Common myeloid progenitor, CD34-positive (primary cell): ENCODE measurements at regions of chrX and their contacts with region 1.

Region 1: DNA sequence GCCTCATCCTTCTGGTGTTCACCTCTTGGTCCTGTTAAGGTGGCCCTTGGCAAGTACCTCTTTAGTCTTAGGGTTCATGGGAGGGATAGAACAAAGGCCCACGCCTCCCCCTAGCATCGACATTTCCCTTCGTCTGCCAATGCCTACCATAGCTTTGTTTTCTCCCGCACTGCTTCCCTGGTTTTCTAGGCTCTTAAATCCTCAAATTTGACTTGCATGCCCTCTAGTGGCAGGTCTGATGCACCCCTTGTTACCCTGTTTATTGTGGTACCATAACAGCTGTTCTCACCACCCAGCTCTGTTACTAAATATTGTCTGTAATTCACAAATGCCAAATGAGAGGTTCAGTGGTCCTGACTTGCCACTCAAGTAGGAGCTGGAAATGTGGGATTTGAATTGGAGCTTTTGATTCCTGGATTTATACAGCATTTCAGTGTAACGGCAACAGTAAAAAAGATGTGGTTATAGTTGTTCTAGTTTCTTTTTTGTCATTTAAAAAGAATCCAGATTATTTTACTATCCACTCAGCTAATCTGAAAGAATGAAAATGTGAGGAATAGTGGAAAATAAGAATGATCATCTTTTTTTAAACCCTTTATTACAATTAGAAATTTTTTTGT is 100.1 kb downstream of the REPS2 start:
- DNase-seq: peak; percentile 67 to 84 (median 81)
- H3K4me3 ChIP-seq: no peak overlapping the region
- H3K27ac ChIP-seq: no peak overlapping the region
- H3K4me1 ChIP-seq: no peaks in the 10 kb centered on the region
- H3K27me3 ChIP-seq: no peaks in the 10 kb centered on the region

Region 2: DNA sequence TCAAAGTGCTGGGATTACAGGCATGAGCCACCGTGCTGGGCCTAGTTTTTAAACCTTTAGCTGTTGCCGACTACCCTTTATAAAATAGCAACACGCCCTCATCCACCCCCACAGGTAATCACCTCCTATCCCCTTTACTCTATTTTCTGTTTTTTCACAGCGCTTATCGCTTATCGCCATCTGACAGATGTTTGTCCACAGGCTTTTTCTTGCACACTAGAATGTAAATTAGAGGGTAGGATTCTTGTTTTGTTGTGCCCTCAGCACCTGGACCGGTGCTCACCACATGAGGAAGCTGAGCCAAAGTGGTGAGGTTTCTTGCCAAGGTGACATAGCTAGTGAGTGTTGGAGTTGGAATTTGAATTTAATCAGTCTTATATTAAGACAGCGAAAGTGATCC is 173.5 kb before region 1 on chrX:
- CTCF ChIA-PET with region 1: interaction called, 15 read pairs
- POLR2A ChIA-PET with region 1: no interaction called
- DNase-seq: peak in 2 of 3 donors; percentile 39 to 59
- H3K4me3 ChIP-seq: no peak overlapping the region
- H3K27ac ChIP-seq: no peak overlapping the region
- H3K4me1 ChIP-seq: peaks cover 13 to 38% (median 26%) of the 10 kb centered on the region in 4 experiments
- H3K27me3 ChIP-seq: peaks cover 0 to 48% (median 0%) of the 10 kb centered on the region in 5 experiments

Region 3: DNA sequence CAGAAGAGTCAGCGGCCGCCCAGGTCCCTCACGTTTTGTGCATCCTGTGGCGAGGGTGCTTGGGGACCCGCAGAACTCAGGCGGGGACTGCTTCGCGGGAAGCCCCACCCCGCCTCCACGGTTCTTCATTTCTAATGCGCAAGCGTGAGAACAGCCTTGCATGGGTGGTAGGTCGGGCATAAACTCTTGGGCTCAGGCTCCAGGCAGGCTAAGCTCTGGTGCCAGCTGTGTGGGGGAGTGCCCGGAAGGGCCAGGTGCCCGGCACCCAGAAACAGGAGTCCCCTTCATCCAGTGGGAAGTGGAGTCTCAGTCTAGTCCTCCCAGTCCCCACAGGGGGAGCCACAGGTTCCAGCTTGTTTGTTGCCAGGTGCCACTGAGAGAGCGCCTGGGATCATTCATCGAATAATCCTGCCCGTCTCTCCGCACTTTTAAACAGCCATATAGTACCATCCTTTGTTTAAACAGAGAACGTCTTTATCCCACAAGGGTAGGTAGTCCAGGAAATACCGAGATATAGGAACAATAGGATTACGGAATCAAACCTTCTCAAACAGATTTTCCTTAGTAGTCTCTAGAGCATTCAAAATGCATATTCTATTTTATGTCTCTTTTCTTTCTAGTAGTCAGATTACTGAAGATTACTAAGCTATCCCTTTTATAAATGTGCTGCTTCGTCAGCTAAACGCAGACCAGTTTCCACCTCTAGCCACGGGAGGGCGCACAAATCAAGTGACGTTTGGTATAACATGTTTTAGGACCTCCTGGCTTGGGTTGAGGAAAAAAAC is 163.7 kb before region 1 on chrX:
- CTCF ChIA-PET with region 1: interaction called, 80 read pairs
- POLR2A ChIA-PET with region 1: interaction called, 6 read pairs
- DNase-seq: peak; percentile 72 to 87 (median 83)
- H3K4me3 ChIP-seq: peak overlapping the region; percentile 39 to 86 (median 60)
- H3K27ac ChIP-seq: peak overlapping the region; percentile 35 to 59
- H3K4me1 ChIP-seq: peaks cover 0 to 9% (median 3%) of the 10 kb centered on the region in 4 experiments
- H3K27me3 ChIP-seq: peaks cover 0 to 41% (median 0%) of the 10 kb centered on the region in 5 experiments

Region 4: DNA sequence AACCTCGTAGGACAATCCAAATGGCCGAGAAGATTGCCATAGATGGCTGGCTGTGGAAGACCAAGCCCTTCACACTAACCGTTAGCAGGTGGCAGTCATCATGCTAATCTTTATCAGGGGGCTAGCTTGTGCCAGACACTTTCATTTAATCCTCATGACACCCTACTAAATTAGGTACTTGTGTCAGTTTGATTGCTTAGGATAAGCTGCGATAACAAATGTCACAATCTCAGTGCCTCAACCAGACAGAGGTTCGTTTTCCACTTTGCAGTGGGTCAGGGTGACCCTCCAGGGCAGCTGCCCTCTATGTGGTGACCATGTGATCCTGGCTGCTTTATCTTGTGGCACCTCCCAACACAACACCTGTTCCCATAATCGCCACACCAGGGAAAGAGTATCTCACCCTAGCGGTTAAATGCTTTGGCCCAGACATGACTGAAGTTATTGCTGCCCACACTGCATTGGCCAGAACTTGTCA is 39.3 kb before region 1 on chrX:
- CTCF ChIA-PET with region 1: interaction called, 12 read pairs
- POLR2A ChIA-PET with region 1: no interaction called
- DNase-seq: peak in 2 of 3 donors; percentile 22 to 61
- H3K4me3 ChIP-seq: peak overlapping the region in 1 of 7 experiments; percentile 51
- H3K27ac ChIP-seq: no peak overlapping the region
- H3K4me1 ChIP-seq: peaks cover 0 to 1% (median 0%) of the 10 kb centered on the region in 4 experiments
- H3K27me3 ChIP-seq: peaks cover 0 to 9% (median 0%) of the 10 kb centered on the region in 5 experiments